ENCODE measurements at regions of chr11 and their contacts with region 1.

Region 1: DNA sequence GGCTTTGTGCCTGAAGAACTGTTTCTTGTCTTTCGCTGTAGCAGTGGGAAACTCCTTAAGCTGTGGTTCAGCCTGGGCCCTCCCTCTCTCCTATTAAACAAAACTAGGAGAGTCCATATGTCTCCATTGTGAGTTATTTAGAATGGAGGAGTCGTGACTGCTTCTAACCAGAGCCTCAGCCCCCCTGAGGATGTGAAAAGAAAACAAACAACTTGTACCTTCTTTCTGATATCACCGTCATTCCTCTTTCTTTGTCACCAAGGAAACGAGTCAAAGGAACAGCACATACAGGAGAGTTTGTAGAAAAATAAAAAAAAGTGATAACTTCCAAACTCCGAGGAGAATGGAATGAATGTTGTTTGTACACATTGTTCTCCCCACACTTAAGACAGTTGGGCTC is 11.6 kb upstream of the EXT2 start:
- DNase-seq: no peak
- H3K4me3 ChIP-seq: no peak overlapping the region
- H3K27ac ChIP-seq: no peak overlapping the region
- H3K4me1 ChIP-seq: peaks cover 0 to 3% (median 1%) of the 10 kb centered on the region in 4 experiments; a peak in 1 of 7 replicates
- H3K27me3 ChIP-seq: no peaks in the 10 kb centered on the region
- CTCF ChIP-seq: no peak
- EP300 ChIP-seq: no peak
- POLR2A ChIP-seq: no peak
- RAD21 ChIP-seq: no peak

Region 2: GRCh38 chr11:44071157-44071556 is 12.7 kb before region 1 on chr11:
- CTCF ChIA-PET with region 1: interaction called, 13 read pairs
- POLR2A ChIA-PET with region 1: interaction called, 4 read pairs
- DNase-seq: no peak
- H3K4me3 ChIP-seq: no peak overlapping the region
- H3K27ac ChIP-seq: no peak overlapping the region
- H3K4me1 ChIP-seq: peaks cover 0 to 3% (median 0%) of the 10 kb centered on the region in 4 experiments; a peak in 4 of 7 replicates
- H3K27me3 ChIP-seq: peaks cover 0 to 4% (median 2%) of the 10 kb centered on the region in 4 experiments; a peak in 3 of 7 replicates
- CTCF ChIP-seq: peak; percentile 44 to 50 (median 49); a peak in 3 of 4 replicates
- EP300 ChIP-seq: no peak
- POLR2A ChIP-seq: no peak
- RAD21 ChIP-seq: peak; percentile 11 to 41; a peak in 1 of 4 replicates

Region 3: DNA sequence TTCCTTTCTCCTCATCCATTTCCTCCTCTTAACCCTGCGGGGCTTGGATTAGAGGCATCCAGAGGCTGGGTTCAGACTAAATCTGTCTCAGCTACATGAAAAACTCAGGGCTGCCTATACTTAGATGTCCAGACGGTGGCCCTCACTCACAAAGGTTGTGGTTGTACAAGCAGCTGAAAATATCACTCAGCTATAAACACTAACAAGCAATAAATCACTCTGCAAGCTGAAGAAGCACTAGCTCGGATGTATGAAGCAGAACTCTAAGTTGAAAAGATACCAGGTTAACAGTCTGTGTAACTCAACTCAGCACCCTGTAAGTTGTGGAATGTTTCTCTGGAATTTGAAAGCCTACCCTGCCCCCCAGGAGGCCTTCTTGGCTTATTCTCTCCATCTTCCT is 94.5 kb after region 1 on chr11:
- CTCF ChIA-PET with region 1: no interaction called
- POLR2A ChIA-PET with region 1: no interaction called
- DNase-seq: no peak
- H3K4me3 ChIP-seq: peak overlapping the region in 1 of 4 experiments; percentile 10; a peak in 1 of 8 replicates
- H3K27ac ChIP-seq: no peak overlapping the region
- H3K4me1 ChIP-seq: peaks cover 3 to 12% (median 8%) of the 10 kb centered on the region in 4 experiments; a peak in 5 of 7 replicates
- H3K27me3 ChIP-seq: no peaks in the 10 kb centered on the region
- CTCF ChIP-seq: no peak
- EP300 ChIP-seq: no peak
- POLR2A ChIP-seq: no peak
- RAD21 ChIP-seq: peak in 1 of 2 experiments; percentile 4; a peak in 1 of 4 replicates

Measured in H1 (cell line).